Activated CD4-positive, alpha-beta memory T cell treated with anti-CD3 and anti-CD28 coated beads for 36 hours (primary cell): ENCODE measurements at regions of chr9 and their contacts with region 1.

Region 1: GRCh38 chr9:99819856-99820684 is 1.6 kb upstream of the NR4A3 start:
- DNase-seq: peak; percentile 92
- H3K4me3 Mint-ChIP-seq: peak overlapping the region; percentile 86
- H3K27ac Mint-ChIP-seq: peak overlapping the region; percentile 87
- H3K4me1 Mint-ChIP-seq: peaks cover 54% of the 10 kb centered on the region
- H3K27me3 Mint-ChIP-seq: peaks cover 17% of the 10 kb centered on the region

Region 2: DNA sequence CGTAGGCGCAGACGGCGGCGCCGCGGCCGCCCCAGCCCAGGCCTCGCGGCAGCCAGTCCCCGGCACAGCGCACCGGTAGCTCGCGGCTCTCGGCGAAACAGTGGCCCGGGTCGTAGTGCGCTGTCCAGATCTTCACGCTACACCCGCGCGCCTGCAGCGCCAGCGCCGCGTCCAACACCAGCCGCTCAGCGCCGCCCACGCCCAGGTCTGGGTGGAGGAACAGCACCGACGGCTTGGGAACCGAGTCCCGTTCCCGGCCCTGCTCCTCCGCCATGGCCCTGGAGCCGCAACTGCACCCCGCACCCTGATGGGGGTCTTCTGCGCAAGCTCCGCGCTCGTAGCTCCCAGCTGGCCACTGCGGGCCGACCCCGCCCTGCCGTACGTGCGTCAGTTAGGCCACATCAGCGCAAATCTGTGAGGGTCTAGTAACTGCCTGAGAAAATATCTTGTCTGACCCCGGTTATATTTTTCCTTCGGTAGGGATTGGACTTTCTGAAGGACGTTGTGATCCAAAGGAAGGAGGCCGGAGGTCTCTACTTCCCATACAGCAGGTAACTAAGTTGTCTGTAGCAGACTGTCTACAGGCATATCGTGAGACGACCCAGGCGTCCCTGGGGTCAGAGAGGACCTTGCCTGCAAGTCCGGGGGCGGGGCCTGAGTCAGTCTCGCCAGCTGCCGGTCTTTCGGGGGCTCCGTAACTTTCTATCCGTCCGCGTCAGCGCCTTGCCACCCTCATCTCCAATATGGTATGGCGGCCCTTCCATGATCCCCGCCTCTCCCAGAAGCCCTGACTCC is 598.3 kb before region 1 on chr9 and contains the starts of genes ALG2 and SEC61B:
- CTCF ChIA-PET with region 1: interaction called, 4 read pairs
- POLR2A ChIA-PET with region 1: no interaction called
- intact Hi-C with region 1: loop called (anchors 1 kb)
- DNase-seq: peak; percentile 94
- H3K4me3 Mint-ChIP-seq: peak within 1 kb of the TSS; percentile 97
- H3K27ac Mint-ChIP-seq: peak within 1 kb of the TSS; percentile 95
- H3K4me1 Mint-ChIP-seq: peaks cover 66% of the 10 kb centered on the region
- H3K27me3 Mint-ChIP-seq: no peaks in the 10 kb centered on the region
- total RNA-seq, gene ALG2: 18.6 to 20.8 TPM
- total RNA-seq, gene SEC61B: 161 to 166 TPM

Region 3: GRCh38 chr9:99785010-99785590 is 35.0 kb before region 1 on chr9:
- CTCF ChIA-PET with region 1: no interaction called
- POLR2A ChIA-PET with region 1: no interaction called
- intact Hi-C with region 1: no loop called
- DNase-seq: no peak
- H3K4me3 Mint-ChIP-seq: no peak overlapping the region
- H3K27ac Mint-ChIP-seq: no peak overlapping the region
- H3K4me1 Mint-ChIP-seq: no peaks in the 10 kb centered on the region
- H3K27me3 Mint-ChIP-seq: peaks cover 30% of the 10 kb centered on the region

Region 4: DNA sequence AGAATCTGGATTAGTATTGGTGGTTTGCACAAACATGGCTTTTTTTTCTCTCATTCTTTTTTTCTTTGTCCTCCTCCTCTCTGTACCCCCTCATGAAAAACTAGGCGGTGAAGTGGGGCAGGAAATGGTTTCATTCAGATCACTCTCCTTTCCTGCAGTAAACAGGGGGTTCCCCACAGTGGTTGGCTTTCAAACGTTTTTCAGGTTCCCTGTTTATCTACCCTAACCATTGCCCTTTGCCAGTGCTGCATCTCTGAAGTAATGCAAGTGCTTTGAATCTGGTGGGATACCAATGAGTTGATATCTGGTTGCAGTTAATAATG is 31.4 kb after region 1 on chr9:
- CTCF ChIA-PET with region 1: interaction called, 5 read pairs
- POLR2A ChIA-PET with region 1: no interaction called
- intact Hi-C with region 1: loop called (anchors 1 kb)
- DNase-seq: peak; percentile 53
- H3K4me3 Mint-ChIP-seq: no peak overlapping the region
- H3K27ac Mint-ChIP-seq: no peak overlapping the region
- H3K4me1 Mint-ChIP-seq: peaks cover 32% of the 10 kb centered on the region
- H3K27me3 Mint-ChIP-seq: no peaks in the 10 kb centered on the region

Region 5: GRCh38 chr9:99954819-99955218 is 134.7 kb after region 1 on chr9:
- CTCF ChIA-PET with region 1: interaction called, 4 read pairs
- POLR2A ChIA-PET with region 1: no interaction called
- intact Hi-C with region 1: loop called (anchors 2 kb)
- DNase-seq: no peak
- H3K4me3 Mint-ChIP-seq: no peak overlapping the region
- H3K27ac Mint-ChIP-seq: peak overlapping the region; percentile 62
- H3K4me1 Mint-ChIP-seq: peaks cover 22% of the 10 kb centered on the region
- H3K27me3 Mint-ChIP-seq: no peaks in the 10 kb centered on the region

Region 6: GRCh38 chr9:100098887-100099721 is 279.0 kb after region 1 on chr9 and contains the starts of genes ERP44 and INVS:
- CTCF ChIA-PET with region 1: no interaction called
- POLR2A ChIA-PET with region 1: no interaction called
- intact Hi-C with region 1: loop called (anchors 1 kb)
- DNase-seq: peak; percentile 98
- H3K4me3 Mint-ChIP-seq: peak within 1 kb of the TSS; percentile 98
- H3K27ac Mint-ChIP-seq: peak within 1 kb of the TSS; percentile 83
- H3K4me1 Mint-ChIP-seq: peaks cover 32% of the 10 kb centered on the region
- H3K27me3 Mint-ChIP-seq: no peaks in the 10 kb centered on the region
- total RNA-seq, gene ERP44: 14.5 to 14.8 TPM
- total RNA-seq, gene INVS: 10.5 to 12.1 TPM

Region 7: GRCh38 chr9:100352727-100353505 is 532.8 kb after region 1 on chr9 and contains the start of gene TEX10:
- CTCF ChIA-PET with region 1: no interaction called
- POLR2A ChIA-PET with region 1: no interaction called
- intact Hi-C with region 1: loop called (anchors 5 kb)
- DNase-seq: peak; percentile 92
- H3K4me3 Mint-ChIP-seq: peak within 1 kb of the TSS; percentile 87
- H3K27ac Mint-ChIP-seq: peak within 1 kb of the TSS; percentile 69
- H3K4me1 Mint-ChIP-seq: peaks cover 44% of the 10 kb centered on the region
- H3K27me3 Mint-ChIP-seq: no peaks in the 10 kb centered on the region
- total RNA-seq, gene TEX10: 20.3 to 20.7 TPM

Region 8: DNA sequence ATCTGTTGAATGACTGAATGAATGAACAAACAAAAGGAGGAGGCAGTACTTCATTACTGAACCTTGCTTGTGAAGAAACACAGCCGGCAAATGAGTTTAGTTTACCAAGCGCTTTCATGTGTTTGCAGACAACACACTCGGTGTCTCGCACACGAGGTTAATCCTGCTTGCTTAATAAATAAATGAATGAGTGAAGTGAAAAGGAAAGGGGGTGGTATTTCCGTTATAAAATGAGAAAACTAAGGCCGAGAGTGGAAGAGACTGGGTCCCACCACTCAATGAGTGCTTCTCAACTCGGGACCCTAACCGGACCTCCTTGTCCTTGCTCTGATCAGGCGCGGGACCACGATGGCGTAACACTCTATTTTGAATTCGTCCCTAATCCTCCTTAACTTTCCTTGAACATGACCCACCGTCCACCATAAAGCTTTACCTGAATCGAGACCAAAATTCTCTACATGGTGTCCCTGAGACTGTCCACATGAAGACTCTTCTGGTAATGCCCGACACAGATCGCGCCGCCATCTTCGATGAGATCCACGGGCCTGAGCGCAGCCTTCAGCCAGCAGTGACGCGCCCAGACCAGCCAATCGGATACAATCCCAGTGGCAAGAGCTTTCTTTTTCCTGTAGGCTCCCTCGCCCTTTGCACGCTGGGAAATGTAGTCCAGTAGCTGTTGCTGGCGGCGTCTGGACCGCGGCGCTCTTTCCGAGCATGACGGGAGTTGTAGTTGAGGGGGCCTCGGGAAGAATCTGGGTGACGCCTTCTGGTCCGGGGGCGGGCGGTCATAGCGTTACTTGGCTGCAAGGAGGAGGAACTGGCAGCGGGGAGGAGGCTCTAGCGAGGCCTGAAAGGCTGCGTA is 1578.2 kb after region 1 on chr9 and contains the starts of genes MRPL50 and ZNF189:
- CTCF ChIA-PET with region 1: no interaction called
- POLR2A ChIA-PET with region 1: no interaction called
- intact Hi-C with region 1: loop called (anchors 5 kb)
- DNase-seq: peak; percentile 98
- H3K4me3 Mint-ChIP-seq: peak within 1 kb of the TSS; percentile 100
- H3K27ac Mint-ChIP-seq: peak within 1 kb of the TSS; percentile 98
- H3K4me1 Mint-ChIP-seq: peaks cover 68% of the 10 kb centered on the region
- H3K27me3 Mint-ChIP-seq: no peaks in the 10 kb centered on the region
- total RNA-seq, gene MRPL50: 13.3 to 13.4 TPM
- total RNA-seq, gene ZNF189: 10.2 to 10.6 TPM